ENCODE measurements at regions of chr4 and their contacts with region 1.

Region 1: DNA sequence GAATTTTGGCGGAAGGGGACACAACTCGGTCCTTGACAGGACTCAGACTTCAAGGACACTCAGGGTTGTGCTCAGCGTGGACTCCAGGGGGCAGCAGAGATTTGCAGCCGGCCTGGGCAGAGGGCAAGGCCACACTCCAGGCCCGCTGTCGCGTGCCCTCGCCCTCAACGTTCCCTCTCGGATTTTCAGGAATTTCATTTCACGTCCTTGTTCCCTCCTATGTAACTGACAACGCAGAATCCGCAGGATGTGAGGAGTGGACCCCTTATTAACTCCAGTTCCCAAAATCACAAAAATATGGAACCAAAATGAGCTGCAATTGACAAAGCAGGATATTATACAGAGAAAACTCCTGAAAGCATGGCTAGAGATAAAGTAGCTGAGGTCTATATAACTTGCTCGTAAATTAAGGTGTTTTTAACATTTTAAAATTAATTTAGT is 21.0 kb upstream of the DCTD start:
- DNase-seq: peak; percentile 68
- H3K4me3 ChIP-seq: no peak overlapping the region
- H3K27ac ChIP-seq: no peak overlapping the region
- H3K4me1 ChIP-seq: no peaks in the 10 kb centered on the region
- H3K27me3 ChIP-seq: peaks cover 5 to 12% of the 10 kb centered on the region in 2 experiments
- CTCF ChIP-seq: peak; percentile 91 to 93
- POLR2A ChIP-seq: no peak

Region 2: DNA sequence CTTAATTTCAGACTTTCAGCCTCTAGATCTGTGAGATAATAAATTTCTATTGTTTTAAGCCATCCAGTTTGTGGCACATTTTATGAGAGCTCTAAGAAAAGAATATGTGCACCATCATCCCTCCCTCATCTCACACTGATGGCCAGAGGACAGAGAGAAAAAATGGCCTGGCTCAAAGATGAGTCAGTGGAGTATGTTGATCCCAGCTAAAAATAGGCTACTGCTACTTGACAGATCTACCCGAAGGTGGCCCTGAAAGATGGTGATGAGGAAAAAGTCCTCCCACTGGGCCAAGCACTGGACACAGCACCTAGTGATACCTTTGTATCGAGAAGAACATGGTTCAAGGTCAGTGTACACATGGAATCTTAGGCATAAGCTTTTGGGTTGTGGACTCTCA is 17.2 kb after region 1 on chr4:
- CTCF ChIA-PET with region 1: interaction called, 12 read pairs
- POLR2A ChIA-PET with region 1: no interaction called
- dilution Hi-C with region 1: no loop called
- intact Hi-C with region 1: no loop called
- DNase-seq: no peak
- H3K4me3 ChIP-seq: no peak overlapping the region
- H3K27ac ChIP-seq: no peak overlapping the region
- H3K4me1 ChIP-seq: no peaks in the 10 kb centered on the region
- H3K27me3 ChIP-seq: no peaks in the 10 kb centered on the region
- CTCF ChIP-seq: no peak
- POLR2A ChIP-seq: no peak

Region 3: GRCh38 chr4:183059797-183060196 is 121.6 kb after region 1 on chr4:
- CTCF ChIA-PET with region 1: interaction called, 10 read pairs
- POLR2A ChIA-PET with region 1: no interaction called
- dilution Hi-C with region 1: no loop called
- intact Hi-C with region 1: no loop called
- DNase-seq: no peak
- H3K4me3 ChIP-seq: no peak overlapping the region
- H3K27ac ChIP-seq: no peak overlapping the region
- H3K4me1 ChIP-seq: no peaks in the 10 kb centered on the region
- H3K27me3 ChIP-seq: peaks cover 8 to 9% of the 10 kb centered on the region in 2 experiments
- CTCF ChIP-seq: no peak
- POLR2A ChIP-seq: no peak

Region 4: DNA sequence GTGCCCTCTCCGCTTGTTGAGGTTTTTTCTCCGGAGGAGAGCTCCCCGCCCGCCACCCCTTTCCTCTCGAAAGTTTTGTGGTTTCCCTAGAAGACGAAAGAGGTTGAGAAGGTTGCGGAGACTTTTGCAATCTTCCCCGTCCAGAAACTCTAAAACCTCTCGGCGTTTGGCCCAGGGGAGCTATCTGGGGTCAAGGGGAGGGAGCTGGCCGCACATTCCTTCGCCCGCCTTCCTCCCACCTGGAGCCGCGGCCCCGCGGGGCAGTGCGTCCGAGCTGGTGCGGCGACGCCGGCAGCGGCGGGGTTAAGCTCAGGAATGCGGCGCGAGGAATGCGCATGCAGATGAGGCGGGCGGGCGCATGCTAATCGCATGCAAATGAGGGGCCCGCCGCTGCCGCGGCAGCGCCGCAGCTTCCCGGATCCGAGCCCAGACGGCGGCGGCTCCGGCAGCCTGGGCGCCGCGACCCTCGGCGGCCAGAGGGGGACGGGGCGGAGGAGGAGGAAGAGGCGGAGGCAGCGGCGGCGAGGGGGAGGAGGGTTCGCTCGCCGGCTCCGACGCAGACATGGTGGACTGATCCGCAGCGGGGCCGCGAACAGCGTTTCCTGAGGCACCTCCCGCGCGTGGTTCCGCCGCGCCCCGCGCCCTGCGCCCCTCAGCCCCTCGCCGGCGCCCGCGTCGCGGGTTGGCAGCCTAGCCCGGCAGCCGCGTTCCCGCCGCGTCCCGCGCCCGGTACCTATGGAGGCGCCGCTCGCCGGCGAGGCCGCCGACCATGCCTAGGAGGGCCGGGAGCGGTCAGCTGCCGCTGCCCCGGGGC is 160.7 kb after region 1 on chr4 and contains the start of gene WWC2:
- CTCF ChIA-PET with region 1: interaction called, 12 read pairs
- POLR2A ChIA-PET with region 1: no interaction called
- dilution Hi-C with region 1: no loop called
- intact Hi-C with region 1: no loop called
- DNase-seq: peak; percentile 94
- H3K4me3 ChIP-seq: peak within 1 kb of the TSS; percentile 80 to 90 (median 83)
- H3K27ac ChIP-seq: peak within 1 kb of the TSS; percentile 99
- H3K4me1 ChIP-seq: peaks cover 24% of the 10 kb centered on the region
- H3K27me3 ChIP-seq: no peaks in the 10 kb centered on the region
- CTCF ChIP-seq: no peak
- POLR2A ChIP-seq: peak; percentile 68
- total RNA-seq, gene WWC2: 51.8 and 52.2 TPM in 2 replicates

Region 5: GRCh38 chr4:183261953-183262775 is 323.9 kb after region 1 on chr4:
- CTCF ChIA-PET with region 1: interaction called, 174 read pairs
- POLR2A ChIA-PET with region 1: no interaction called
- dilution Hi-C with region 1: no loop called
- intact Hi-C with region 1: loop called (anchors 1 kb)
- DNase-seq: peak; percentile 74
- H3K4me3 ChIP-seq: no peak overlapping the region
- H3K27ac ChIP-seq: peak overlapping the region; percentile 16
- H3K4me1 ChIP-seq: no peaks in the 10 kb centered on the region
- H3K27me3 ChIP-seq: no peaks in the 10 kb centered on the region
- CTCF ChIP-seq: peak; percentile 76 to 85
- POLR2A ChIP-seq: no peak

Region 6: DNA sequence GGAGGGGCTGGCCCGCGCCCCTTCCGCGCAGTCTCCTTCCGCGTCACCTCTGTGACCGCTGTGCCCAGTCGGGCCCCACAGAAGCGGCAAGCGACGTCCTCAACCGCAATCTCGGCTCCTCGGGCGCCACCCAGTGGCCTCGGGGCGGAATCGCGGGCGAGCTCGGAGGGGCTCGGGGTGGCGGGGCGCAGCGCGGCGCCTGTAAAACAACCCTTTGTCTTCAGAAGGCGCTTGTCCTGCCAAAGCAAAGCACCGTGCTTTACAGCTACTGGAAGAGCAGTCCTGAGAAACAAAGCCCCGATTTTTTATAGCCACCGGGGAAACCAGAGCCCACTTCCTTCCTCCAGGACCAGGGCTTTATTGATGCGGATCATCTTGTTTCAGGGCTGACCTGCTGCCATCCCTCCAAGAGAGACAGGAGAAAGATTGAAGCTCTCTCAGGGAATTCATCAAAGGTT is 468.9 kb after region 1 on chr4:
- CTCF ChIA-PET with region 1: interaction called, 19 read pairs
- POLR2A ChIA-PET with region 1: no interaction called
- dilution Hi-C with region 1: no loop called
- intact Hi-C with region 1: loop called (anchors 1 kb)
- DNase-seq: peak; percentile 90
- H3K4me3 ChIP-seq: peak overlapping the region; percentile 28 to 70 (median 33)
- H3K27ac ChIP-seq: peak overlapping the region; percentile 39
- H3K4me1 ChIP-seq: peaks cover 7% of the 10 kb centered on the region
- H3K27me3 ChIP-seq: no peaks in the 10 kb centered on the region
- CTCF ChIP-seq: peak; percentile 91 to 96
- POLR2A ChIP-seq: no peak